Activated T-helper 1 cell treated with anti-CD3 and anti-CD28 coated beads, Interleukin-12 subunit alpha, Interleukin-12 subunit beta, Interleukin-2, Interleukin-4 antibody, amounts not matched to agents 30 ng/mL and 10 ng/mL and 1 ng/mL, durations not matched to agents 14 hours and 24 hours and 36 hours (primary cell): ENCODE measurements at regions of chr2 and their contacts with region 1.

Region 1: GRCh38 chr2:39216346-39217191 is 27.2 kb downstream of the CDKL4 start:
- DNase-seq: peak; percentile 85
- H3K4me3 Mint-ChIP-seq: peak overlapping the region; percentile 30
- H3K27ac Mint-ChIP-seq: peak overlapping the region; percentile 91
- H3K4me1 Mint-ChIP-seq: peaks cover 77% of the 10 kb centered on the region
- H3K27me3 Mint-ChIP-seq: no peaks in the 10 kb centered on the region

Region 2: DNA sequence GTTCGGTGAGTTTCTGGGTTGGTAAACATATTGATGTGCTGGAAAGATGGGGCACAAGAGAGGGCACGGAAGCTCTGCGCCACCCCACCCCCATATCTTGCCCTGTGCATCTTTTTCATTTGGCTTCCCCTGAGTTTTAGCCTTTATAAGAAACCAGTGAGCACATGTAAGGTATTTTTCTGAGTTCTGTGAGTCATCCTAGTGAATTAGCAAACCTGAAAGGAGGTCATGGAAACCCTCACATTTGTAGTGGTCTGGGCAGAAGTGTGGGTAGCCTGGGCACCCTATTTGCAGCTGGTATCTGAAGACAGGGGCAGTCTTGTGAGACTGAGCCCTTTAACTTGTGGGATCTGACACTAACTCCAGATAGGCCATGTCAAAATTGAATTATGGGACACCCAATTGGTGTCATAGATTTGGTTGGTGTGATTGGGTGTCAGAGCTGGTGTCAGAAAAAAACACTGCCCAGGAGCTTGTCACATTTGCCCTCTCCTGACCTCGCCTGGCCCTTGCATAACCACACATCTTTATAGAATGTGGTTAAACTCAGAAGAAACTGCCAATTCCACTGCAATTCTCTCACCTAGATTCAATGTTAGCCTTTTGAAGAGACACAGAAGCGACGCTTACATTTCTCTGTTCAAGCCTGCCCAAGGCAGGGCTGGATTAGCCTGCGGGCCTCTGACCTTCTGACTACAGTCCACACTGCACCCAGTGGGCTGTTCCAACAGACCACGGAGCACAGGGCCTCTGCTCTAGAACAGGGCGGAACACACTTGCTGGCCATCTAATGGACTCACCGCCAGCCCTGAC is 562.6 kb before region 1 on chr2:
- intact Hi-C with region 1: loop called (anchors 5 kb)
- DNase-seq: peak; percentile 30
- H3K4me3 Mint-ChIP-seq: peak overlapping the region; percentile 68
- H3K27ac Mint-ChIP-seq: peak overlapping the region; percentile 90
- H3K4me1 Mint-ChIP-seq: peaks cover 80% of the 10 kb centered on the region
- H3K27me3 Mint-ChIP-seq: no peaks in the 10 kb centered on the region

Region 3: GRCh38 chr2:39033980-39034379 is 182.6 kb before region 1 on chr2:
- intact Hi-C with region 1: no loop called
- DNase-seq: no peak
- H3K4me3 Mint-ChIP-seq: no peak overlapping the region
- H3K27ac Mint-ChIP-seq: no peak overlapping the region
- H3K4me1 Mint-ChIP-seq: peaks cover 5% of the 10 kb centered on the region
- H3K27me3 Mint-ChIP-seq: no peaks in the 10 kb centered on the region

Region 4: DNA sequence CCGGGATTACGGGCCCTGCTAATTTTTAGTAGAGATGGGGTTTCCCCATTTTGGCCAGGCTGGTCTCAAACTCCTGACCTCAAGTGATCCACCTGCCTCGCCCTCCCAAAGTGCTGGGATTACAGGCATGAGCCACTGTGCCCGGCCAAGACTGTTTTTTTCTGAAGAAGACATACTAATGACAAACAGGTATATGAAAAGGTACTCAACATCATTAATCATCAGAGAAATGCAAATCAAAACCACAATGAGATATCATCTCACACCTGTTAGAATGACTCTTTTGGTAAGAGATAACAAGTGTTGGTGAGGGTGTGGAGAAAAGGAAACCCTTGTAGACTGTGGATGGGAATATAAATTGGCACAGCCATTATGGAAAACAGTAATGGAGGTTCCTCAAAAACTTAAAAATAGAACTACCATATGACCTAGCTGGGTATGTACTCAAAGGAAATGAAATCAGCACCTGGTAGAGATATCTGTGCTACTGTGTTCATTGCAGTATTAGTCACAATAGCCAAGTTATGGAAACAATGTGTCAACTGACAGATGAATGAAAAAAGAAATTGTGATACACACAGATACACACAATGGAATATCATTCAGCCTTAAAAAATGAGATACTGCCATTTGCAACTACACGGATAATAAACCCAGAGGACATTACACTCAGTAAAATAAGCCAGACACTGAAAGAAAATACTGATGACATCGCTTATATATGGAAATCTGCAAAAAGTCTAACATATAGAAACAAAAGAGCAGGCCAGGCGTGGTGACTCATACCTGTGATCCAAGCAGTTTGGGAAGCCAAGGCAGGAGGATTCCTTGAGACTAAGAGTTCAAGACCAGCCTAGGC is 116.5 kb before region 1 on chr2:
- intact Hi-C with region 1: loop called (anchors 1 kb)
- DNase-seq: no peak
- H3K4me3 Mint-ChIP-seq: peak overlapping the region; percentile 53
- H3K27ac Mint-ChIP-seq: peak overlapping the region; percentile 89
- H3K4me1 Mint-ChIP-seq: peaks cover 70% of the 10 kb centered on the region
- H3K27me3 Mint-ChIP-seq: no peaks in the 10 kb centered on the region

Region 5: GRCh38 chr2:39171621-39172020 is 44.9 kb before region 1 on chr2:
- intact Hi-C with region 1: loop called (anchors 5 kb)
- DNase-seq: no peak
- H3K4me3 Mint-ChIP-seq: no peak overlapping the region
- H3K27ac Mint-ChIP-seq: no peak overlapping the region
- H3K4me1 Mint-ChIP-seq: peaks cover 28% of the 10 kb centered on the region
- H3K27me3 Mint-ChIP-seq: peaks cover 4% of the 10 kb centered on the region

Region 6: DNA sequence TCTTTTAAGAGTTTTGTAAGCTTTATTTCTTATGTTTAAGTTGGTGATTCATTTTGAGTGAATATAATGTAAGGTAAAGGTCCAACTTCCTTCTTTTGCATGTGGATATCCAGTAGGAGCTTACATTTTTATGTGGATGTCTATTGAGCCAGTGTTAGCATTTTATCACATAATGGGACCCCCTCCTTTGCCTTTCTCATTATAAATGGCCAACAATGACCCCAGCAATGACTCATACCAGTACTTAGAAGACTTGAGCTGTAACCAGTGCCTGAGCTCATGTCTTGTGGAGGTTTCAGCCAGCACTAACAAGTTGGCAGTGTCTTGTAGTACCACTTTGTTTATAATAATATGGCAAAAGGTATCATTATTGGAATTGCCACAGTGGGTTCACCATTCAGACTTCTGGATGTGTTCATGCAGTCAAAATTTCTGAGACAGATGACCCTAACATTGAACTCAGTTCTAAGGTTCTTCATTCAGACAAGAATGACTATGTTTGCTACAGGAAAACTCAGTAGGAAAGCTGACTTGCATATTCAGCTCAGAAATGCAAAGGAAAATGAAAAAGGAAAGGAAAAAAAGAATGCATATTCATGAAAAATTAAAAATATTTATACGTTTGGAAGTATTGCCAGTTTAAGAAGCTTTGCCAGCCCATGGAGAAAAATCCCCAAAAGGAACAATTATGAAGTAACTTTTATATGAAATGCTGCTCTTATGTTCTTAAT is 13.8 kb before region 1 on chr2:
- intact Hi-C with region 1: loop called (anchors 1 kb)
- DNase-seq: no peak
- H3K4me3 Mint-ChIP-seq: no peak overlapping the region
- H3K27ac Mint-ChIP-seq: peak overlapping the region; percentile 52
- H3K4me1 Mint-ChIP-seq: peaks cover 20% of the 10 kb centered on the region
- H3K27me3 Mint-ChIP-seq: no peaks in the 10 kb centered on the region

Region 7: GRCh38 chr2:39300044-39300978 is 83.7 kb after region 1 on chr2:
- intact Hi-C with region 1: no loop called
- DNase-seq: no peak
- H3K4me3 Mint-ChIP-seq: no peak overlapping the region
- H3K27ac Mint-ChIP-seq: no peak overlapping the region
- H3K4me1 Mint-ChIP-seq: no peaks in the 10 kb centered on the region
- H3K27me3 Mint-ChIP-seq: no peaks in the 10 kb centered on the region

Region 8: DNA sequence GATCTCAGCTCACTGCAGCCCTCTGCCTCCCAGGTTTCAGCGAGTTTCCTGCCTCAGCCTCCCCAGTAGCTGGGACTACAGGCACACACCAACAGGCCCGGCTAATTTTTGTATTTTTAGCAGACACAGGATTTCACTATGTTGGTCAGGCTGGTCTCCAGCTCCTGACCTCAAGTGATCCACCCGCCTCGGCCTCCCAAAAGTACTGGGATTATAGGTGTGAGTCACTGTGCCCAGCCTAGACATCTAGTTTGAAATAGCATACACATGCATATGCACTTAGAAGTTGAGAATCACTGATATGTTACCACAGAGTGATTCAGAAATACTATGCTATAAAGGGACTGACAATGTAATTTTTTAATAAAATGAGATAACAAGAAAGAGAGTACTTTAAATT is 97.0 kb after region 1 on chr2:
- intact Hi-C with region 1: no loop called
- DNase-seq: no peak
- H3K4me3 Mint-ChIP-seq: no peak overlapping the region
- H3K27ac Mint-ChIP-seq: no peak overlapping the region
- H3K4me1 Mint-ChIP-seq: no peaks in the 10 kb centered on the region
- H3K27me3 Mint-ChIP-seq: no peaks in the 10 kb centered on the region

Region 9: GRCh38 chr2:39379643-39380524 is 163.3 kb after region 1 on chr2:
- intact Hi-C with region 1: no loop called
- DNase-seq: no peak
- H3K4me3 Mint-ChIP-seq: no peak overlapping the region
- H3K27ac Mint-ChIP-seq: peak overlapping the region; percentile 67
- H3K4me1 Mint-ChIP-seq: peaks cover 39% of the 10 kb centered on the region
- H3K27me3 Mint-ChIP-seq: no peaks in the 10 kb centered on the region

Region 10: DNA sequence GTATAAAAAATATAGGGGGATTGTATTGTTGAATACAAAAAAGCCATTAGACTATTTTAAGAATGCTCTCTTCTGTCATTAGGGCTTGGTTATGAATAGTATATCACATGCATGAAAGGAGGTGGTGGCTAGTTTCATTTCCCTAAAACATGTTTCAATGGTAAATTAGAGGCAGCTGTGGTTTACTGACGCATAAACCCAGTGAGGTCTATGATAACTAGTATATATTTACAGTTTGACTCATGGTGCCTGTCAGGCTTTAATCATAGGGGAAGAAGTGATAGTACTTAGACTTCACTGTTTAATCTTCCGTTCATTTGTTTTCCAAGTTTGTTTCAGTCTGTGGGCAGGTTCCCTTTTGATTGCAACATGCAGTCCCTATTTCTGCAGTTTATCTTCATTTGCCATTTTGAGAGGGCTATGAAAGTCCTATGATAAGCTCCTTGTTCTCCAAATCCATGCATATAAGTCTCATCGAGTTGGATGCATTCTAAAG is 275.6 kb after region 1 on chr2:
- intact Hi-C with region 1: loop called (anchors 1 kb)
- DNase-seq: peak; percentile 23
- H3K4me3 Mint-ChIP-seq: peak overlapping the region; percentile 55
- H3K27ac Mint-ChIP-seq: peak overlapping the region; percentile 76
- H3K4me1 Mint-ChIP-seq: peaks cover 52% of the 10 kb centered on the region
- H3K27me3 Mint-ChIP-seq: peaks cover 13% of the 10 kb centered on the region